Sigmoid colon (tissue), 7 donors: ENCODE measurements at regions of chr11 and their contacts with region 1.

Region 1: GRCh38 chr11:101436511-101437142 is 147.2 kb downstream of the TRPC6 start:
- DNase-seq: no peak
- H3K4me3 ChIP-seq: no peak overlapping the region
- H3K27ac ChIP-seq: no peak overlapping the region
- H3K4me1 ChIP-seq: peaks cover 0 to 17% (median 14%) of the 10 kb centered on the region in 4 donors
- H3K27me3 ChIP-seq: no peaks in the 10 kb centered on the region
- CTCF ChIP-seq: peak; percentile 27 to 70 (median 55)
- EP300 ChIP-seq: no peak
- POLR2A ChIP-seq: no peak

Region 2: DNA sequence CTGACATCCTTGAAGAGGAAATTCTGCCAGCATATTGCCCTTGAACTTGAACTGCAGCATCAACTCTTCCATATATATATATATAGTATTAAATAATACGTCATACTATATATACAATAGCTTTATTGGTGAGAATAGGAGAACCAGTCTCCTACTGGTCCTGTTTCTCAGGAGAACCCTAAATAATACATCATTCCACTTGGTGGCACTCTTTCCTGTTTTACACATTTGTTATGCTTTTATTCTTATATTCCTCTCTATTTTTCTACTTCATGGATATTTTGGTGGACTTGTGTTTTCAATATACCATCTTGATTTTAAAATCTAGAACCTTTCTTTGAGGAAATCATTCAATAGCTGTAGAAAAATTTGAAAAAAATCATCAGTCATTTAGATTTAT is 46.1 kb before region 1 on chr11:
- intact Hi-C with region 1: loop called (anchors 1 kb)
- DNase-seq: no peak
- H3K4me3 ChIP-seq: no peak overlapping the region
- H3K27ac ChIP-seq: no peak overlapping the region
- H3K4me1 ChIP-seq: peaks cover 0 to 3% (median 0%) of the 10 kb centered on the region in 4 donors
- H3K27me3 ChIP-seq: no peaks in the 10 kb centered on the region
- CTCF ChIP-seq: peak in 1 of 4 experiments; percentile 46
- EP300 ChIP-seq: no peak
- POLR2A ChIP-seq: no peak